ENCODE measurements at regions of chr9 and their contacts with region 1.

Region 1: DNA sequence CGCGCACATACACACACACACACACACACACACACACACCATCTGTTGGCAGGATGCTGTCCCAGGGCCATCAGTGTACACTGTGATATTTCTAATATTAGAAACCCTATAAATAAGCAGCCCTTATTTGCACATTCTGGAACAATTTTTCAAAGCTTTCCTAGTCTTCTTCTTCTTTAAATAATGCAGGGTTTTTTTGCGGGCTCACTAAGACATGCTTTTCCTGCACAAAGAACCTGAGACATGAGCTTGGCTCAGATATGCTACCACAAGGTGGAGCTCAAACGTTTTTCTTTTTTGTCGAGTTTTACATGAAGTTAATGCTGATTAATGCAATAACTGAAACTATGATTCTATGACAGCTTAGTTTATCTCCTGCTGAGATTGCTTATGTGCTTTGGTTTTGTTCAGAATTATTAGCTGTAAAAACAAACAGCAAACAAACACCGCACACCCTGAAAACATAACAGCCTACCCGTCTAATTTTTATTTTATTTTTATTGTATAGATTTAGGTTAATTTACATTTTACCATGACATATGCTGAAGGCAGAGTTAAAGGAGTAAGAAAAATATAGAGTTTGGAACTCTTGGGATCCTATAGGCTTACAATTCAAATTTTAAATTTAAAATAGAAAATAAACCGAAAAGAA is 95.8 kb downstream of the ALDH1A1 start:
- DNase-seq: peak; percentile 60

Region 2: GRCh38 chr9:72635197-72635596 is 221.9 kb before region 1 on chr9:
- in situ Hi-C with region 1: no loop called
- DNase-seq: no peak

Region 3: DNA sequence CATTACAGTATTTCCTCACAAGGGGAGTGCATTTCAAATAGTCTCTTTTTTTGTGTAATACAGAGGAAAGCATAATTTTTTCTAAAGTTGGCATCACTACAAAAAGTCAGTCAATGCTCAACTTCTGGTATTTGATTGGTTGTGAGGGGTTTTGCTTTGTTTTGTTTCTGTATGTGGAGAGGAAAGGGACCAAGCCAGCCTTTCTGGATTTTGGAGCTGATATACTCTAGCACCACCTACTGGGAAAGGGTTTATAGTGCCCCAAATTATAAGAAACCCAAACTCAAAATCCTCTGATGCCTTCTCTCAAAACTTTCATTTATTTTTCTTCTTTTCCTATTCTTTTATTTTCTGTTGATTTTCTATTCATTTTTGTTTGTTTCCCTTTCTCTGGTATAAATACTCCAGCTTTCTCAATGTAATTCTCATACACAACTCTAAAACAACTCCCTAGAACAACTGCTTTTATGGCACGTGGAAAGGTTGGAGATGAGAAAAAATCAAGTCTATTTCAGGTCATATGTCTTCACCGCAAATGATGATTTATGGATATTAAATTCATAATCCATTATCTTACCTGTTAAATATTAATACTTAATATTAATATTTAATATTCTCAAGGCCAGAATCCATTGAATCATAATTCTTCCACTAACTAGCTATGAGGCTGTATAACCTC is 225.0 kb after region 1 on chr9:
- in situ Hi-C with region 1: loop called (anchors 25 kb)
- DNase-seq: peak; percentile 53

Region 4: DNA sequence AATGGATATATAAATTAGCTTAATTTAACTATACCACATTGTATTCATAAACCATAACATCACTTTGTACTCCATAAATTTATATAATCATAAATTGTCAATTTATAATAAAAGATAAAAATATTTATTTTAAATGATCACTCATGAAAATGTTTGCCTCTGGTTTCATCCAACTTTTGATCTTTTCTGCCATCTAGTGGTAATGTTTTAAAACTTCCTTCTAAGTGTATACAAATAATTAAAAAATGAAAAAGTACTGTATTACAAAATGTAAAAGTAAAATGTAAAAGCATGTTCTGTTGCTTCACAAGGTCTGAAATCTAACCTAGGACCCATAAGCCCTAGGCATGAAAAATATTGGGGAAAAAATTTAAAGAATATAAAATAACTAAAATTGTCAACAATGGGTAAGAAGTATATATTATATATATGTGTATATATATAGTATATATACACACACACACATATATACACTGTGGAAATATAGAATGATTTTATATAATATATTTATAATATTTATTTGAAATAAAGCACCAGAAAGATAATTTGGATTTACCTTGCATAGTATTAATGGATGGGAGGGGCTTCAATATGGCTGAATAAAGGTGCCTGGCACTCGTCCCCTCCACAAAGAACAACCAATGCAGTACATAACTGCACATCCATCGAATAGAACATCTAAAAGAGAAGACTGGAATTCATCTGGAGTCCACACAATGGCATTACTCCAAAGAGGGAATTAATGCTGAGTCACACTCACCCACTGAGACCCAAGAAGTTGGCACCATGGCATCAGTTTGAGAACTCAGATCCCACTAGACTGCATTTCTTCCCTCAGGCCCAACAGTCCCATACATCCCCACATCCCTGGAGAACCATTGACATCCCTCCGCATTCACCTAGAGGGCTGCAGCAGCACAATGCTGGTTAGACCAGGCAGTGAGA is 327.1 kb after region 1 on chr9:
- in situ Hi-C with region 1: loop called (anchors 25 kb)
- DNase-seq: peak; percentile 57

Measured in ACHN (cell line).